A549 (cell line): ENCODE measurements at regions of chr10 and their contacts with region 1.

Region 1: DNA sequence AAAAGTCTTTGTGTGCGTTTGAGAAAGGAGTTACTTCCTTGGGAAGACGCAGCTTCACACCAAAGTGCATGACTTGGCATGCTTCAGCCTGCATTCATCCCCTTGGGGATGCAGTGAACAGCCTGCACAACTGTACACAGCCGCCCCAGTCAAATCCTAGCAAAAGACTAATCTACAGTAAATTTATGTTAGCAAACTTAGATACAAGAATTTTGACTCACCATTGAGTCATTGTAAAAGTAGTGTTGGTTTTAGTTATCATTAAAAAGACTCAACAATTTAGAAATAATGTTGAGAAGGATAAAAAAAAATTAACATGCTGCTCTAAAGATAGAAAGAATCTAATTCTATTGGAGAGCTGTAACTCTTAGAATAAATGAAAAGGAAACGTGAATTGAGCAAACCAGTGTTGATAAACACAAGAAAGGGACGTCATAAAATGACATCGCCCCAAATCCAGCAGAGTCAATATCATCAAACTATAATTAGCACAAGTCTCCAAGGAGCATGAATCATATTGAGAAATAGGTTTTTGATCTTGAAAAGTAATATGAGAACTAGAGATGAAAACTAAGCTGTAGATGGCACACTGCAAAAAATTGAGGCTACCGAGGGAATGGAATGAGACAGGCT is 11.9 kb upstream of the OPTN start:
- DNase-seq: peak; percentile 38 to 71
- ATAC-seq: peak; percentile 83 to 89
- H3K4me3 ChIP-seq: no peak overlapping the region
- H3K27ac ChIP-seq: 0 out of 6 replicates have a peak overlapping the region, but pooled peaks of 1 of the 2 experiments have one; percentile 38
- H3K4me1 ChIP-seq: peaks cover 17% of the 10 kb centered on the region
- CTCF ChIP-seq: no peak
- EP300 ChIP-seq: no peak
- POLR2A ChIP-seq: no peak
- RAD21 ChIP-seq: no peak

Region 2: GRCh38 chr10:13038391-13038790 is 49.7 kb before region 1 on chr10:
- CTCF ChIA-PET with region 1: no interaction called
- POLR2A ChIA-PET with region 1: no interaction called
- DNase-seq: no peak
- ATAC-seq: peak in 1 of 2 experiments; percentile 38; a peak in 1 of 6 replicates
- H3K4me3 ChIP-seq: no peak overlapping the region
- H3K27ac ChIP-seq: no peak overlapping the region
- H3K4me1 ChIP-seq: peaks cover 4% of the 10 kb centered on the region; the same call in 1 of the 3 replicates
- CTCF ChIP-seq: no peak
- EP300 ChIP-seq: no peak
- POLR2A ChIP-seq: no peak
- RAD21 ChIP-seq: no peak

Region 3: GRCh38 chr10:13099666-13100348 is 11.7 kb after region 1 on chr10 and contains the start of gene OPTN:
- CTCF ChIA-PET with region 1: interaction called, 24 read pairs
- POLR2A ChIA-PET with region 1: no interaction called
- DNase-seq: peak; percentile 83 to 87
- ATAC-seq: peak; percentile 84
- H3K4me3 ChIP-seq: peak within 1 kb of the TSS; percentile 97
- H3K27ac ChIP-seq: peak within 1 kb of the TSS; percentile 88 to 98
- H3K4me1 ChIP-seq: peaks cover 22% of the 10 kb centered on the region; the same call in 2 of the 3 replicates
- CTCF ChIP-seq: peak; percentile 72
- EP300 ChIP-seq: no peak
- POLR2A ChIP-seq: peak; percentile 30
- RAD21 ChIP-seq: peak; percentile 79 to 82
- polyA plus RNA-seq, gene OPTN: 24.3 and 33.2 TPM in 2 replicates

Region 4: DNA sequence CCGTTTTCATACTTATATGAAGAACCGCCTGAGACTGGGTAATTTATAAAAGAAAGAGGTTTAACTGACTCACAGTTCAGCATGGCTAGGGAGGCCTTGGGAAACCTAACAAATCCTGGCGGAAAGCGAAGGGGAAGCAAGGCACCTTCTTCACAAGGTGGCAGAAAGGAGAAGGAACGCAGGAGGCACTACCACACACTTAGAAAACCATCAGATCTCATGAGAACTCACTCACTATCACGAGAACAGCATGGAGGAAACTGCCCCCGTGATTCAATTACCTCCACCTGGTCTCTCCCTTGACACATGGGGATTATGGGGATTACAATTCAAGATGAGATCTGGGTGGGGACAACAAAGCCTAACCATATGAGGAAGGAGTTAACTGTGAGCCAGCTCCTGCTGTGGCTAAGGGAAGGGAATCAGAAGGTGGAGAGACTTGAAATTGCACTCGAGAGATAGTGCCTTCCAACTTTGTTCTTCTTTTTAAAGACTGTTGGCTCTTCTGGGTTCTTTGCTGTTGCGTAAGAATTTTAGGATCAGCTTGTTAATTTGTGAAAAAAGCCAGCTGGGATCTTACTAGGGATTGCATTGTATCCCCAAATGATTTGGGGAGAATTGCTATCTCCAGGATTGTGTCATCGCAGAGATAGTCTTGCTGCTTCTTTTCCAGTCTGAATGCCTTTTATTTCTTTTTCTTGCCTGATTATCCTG is 32.8 kb after region 1 on chr10:
- CTCF ChIA-PET with region 1: no interaction called
- POLR2A ChIA-PET with region 1: no interaction called
- DNase-seq: no peak
- ATAC-seq: no peak
- H3K4me3 ChIP-seq: no peak overlapping the region
- H3K27ac ChIP-seq: no peak overlapping the region
- H3K4me1 ChIP-seq: no peaks in the 10 kb centered on the region
- CTCF ChIP-seq: no peak
- EP300 ChIP-seq: no peak
- POLR2A ChIP-seq: no peak
- RAD21 ChIP-seq: no peak

Region 5: DNA sequence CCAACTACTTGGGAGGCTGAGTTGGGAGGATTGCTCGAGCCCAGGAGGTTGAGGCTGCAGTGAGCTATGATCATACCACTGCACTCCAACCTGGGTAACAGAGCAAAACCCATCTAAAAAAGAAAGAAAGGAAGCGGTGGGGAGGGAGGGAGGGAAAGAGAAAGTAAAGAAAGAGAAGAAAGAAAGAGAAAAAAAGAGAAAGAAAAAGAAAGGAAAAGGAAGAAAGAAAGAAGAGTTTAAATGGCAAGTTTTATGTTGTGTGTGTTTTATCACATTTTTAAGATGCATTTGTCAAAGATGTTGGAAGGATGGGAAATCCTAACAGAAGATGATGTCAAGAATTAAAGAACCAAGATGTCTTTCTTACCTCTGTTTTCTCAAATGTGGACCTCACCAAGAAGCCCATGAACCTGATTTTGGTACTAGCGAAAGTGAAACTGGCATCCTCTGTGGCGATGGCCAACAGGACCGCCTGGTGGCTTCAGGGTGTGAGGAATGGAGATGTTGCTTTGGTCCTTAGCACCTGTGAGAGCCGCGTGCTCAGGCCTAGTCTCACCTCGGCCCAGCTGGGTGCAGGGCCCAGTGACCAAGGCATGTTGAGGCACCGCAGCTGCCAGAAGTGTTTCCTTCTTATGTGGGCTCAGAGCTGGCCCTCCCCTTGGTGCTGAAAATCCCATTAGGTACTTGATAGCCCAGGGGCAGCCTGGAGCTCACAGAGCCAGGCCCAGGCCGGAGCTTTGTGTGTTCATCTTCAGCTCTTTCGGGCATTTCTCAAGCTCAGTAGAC is 136.3 kb after region 1 on chr10:
- CTCF ChIA-PET with region 1: no interaction called
- POLR2A ChIA-PET with region 1: no interaction called
- DNase-seq: no peak
- ATAC-seq: no peak
- H3K4me3 ChIP-seq: no peak overlapping the region
- H3K27ac ChIP-seq: no peak overlapping the region
- H3K4me1 ChIP-seq: 0 out of 3 replicates have a peak, but pooled peaks cover 2% of the 10 kb centered on the region
- CTCF ChIP-seq: no peak
- EP300 ChIP-seq: no peak
- POLR2A ChIP-seq: no peak
- RAD21 ChIP-seq: no peak